Activated T-helper 1 cell treated with anti-CD3 and anti-CD28 coated beads, Interleukin-12 subunit alpha, Interleukin-12 subunit beta, Interleukin-2, Interleukin-4 antibody, amounts not matched to agents 30 ng/mL and 10 ng/mL and 1 ng/mL, durations not matched to agents 14 hours and 24 hours and 36 hours (primary cell): ENCODE measurements at regions of chr2 and their contacts with region 1.

Region 1: GRCh38 chr2:196182439-196183171 is 11.2 kb upstream of the STK17B start:
- DNase-seq: no peak
- H3K4me3 Mint-ChIP-seq: peak overlapping the region; percentile 16
- H3K27ac Mint-ChIP-seq: peak overlapping the region; percentile 91
- H3K4me1 Mint-ChIP-seq: peaks cover 60% of the 10 kb centered on the region
- H3K27me3 Mint-ChIP-seq: no peaks in the 10 kb centered on the region

Region 2: GRCh38 chr2:196101325-196101991 is 81.1 kb before region 1 on chr2:
- intact Hi-C with region 1: no loop called
- DNase-seq: no peak
- H3K4me3 Mint-ChIP-seq: no peak overlapping the region
- H3K27ac Mint-ChIP-seq: no peak overlapping the region
- H3K4me1 Mint-ChIP-seq: peaks cover 30% of the 10 kb centered on the region
- H3K27me3 Mint-ChIP-seq: no peaks in the 10 kb centered on the region

Region 3: DNA sequence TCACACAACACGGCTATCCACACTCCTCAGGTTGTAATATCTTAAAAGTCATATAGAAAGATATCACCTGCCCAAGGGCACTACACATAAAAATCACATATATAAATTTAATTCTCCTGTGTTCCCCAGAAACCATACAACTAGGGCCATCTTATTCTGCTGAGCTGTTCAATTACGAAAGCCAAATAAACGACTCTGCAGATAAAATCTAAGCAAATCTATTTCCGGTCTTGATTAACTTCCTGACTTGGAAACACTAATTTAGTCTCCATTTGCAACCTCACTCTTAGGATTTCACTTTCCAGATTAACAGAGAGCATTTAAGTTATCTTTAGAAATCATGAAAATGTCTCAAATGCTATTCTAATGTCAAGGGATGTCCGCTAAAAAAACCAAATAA is 12.7 kb after region 1 on chr2:
- intact Hi-C with region 1: loop called (anchors 1 kb)
- DNase-seq: no peak
- H3K4me3 Mint-ChIP-seq: no peak overlapping the region
- H3K27ac Mint-ChIP-seq: no peak overlapping the region
- H3K4me1 Mint-ChIP-seq: peaks cover 44% of the 10 kb centered on the region
- H3K27me3 Mint-ChIP-seq: no peaks in the 10 kb centered on the region